Activated CD4-positive, alpha-beta memory T cell treated with anti-CD3 and anti-CD28 coated beads for 36 hours (primary cell): ENCODE measurements at regions of chr2 and their contacts with region 1.

Region 1: DNA sequence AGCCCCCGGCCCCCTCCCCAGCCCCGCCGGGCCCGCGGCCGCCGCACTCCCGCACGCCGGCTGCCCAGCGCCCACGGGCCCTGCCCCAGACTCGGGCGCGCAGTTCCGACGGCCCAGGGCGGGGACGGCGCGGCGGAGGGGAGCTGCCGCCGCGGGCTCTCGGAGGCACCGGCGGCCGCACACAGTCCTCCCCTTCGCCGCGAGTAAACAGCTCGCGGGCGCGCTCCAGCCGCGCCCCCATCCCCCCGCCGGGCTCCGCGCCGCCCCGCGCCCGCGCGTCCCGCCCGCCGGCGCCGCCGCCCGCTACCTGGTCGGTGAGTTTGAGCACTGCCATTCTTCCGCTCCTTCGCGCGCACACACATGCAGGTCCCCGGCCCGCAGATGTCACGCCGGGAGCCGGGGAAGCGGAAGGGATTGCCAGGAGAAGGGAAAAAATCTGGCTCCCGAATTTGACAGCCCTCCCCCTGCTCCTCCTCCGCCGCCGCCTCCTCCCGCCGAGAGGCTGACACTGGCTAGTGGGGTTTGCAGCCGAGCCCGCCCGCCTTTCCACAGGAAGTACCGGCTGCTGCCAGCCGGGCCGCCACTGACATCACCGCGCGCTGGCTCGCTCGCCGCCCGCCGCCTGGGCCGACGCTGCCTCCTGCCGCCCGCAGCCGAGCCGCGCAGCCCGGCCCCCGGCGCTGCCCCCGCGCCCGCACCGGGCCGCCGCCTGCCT is at the start of gene ANKRD44:
- DNase-seq: peak; percentile 91
- H3K4me3 Mint-ChIP-seq: peak within 1 kb of the TSS; percentile 95
- H3K27ac Mint-ChIP-seq: peak within 1 kb of the TSS; percentile 99
- H3K4me1 Mint-ChIP-seq: peaks cover 67% of the 10 kb centered on the region
- H3K27me3 Mint-ChIP-seq: no peaks in the 10 kb centered on the region
- total RNA-seq, gene ANKRD44: 123 to 125 TPM

Region 2: DNA sequence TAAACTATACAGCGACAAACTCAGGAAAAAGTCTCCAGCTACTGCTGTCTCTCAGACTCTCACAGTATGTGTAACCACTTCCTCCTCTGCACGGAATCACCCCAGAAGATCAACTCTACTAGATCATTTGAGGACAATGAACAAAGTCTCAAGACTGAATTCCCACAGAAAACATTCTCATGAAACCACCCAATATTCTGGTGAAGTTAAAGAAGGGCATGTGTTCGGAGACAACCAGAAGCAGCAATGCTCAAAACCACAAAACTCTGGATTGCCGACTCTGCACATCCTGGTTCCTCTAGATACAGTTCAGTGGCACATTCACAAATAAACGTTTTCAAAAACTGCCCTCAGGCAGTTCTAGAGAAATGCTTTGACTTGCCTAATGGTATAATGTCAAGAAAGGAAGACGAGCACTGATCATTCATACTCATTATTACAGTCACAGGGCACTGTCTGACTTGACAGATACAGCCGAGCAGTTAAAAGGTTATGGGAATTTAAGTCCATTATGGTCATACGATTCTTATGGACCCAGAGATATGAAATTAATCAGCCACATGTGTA is 1047.2 kb before region 1 on chr2:
- CTCF ChIA-PET with region 1: no interaction called
- POLR2A ChIA-PET with region 1: no interaction called
- intact Hi-C with region 1: loop called (anchors 10 kb)
- DNase-seq: peak; percentile 62
- H3K4me3 Mint-ChIP-seq: peak overlapping the region; percentile 75
- H3K27ac Mint-ChIP-seq: peak overlapping the region; percentile 99
- H3K4me1 Mint-ChIP-seq: peaks cover 77% of the 10 kb centered on the region
- H3K27me3 Mint-ChIP-seq: no peaks in the 10 kb centered on the region

Region 3: DNA sequence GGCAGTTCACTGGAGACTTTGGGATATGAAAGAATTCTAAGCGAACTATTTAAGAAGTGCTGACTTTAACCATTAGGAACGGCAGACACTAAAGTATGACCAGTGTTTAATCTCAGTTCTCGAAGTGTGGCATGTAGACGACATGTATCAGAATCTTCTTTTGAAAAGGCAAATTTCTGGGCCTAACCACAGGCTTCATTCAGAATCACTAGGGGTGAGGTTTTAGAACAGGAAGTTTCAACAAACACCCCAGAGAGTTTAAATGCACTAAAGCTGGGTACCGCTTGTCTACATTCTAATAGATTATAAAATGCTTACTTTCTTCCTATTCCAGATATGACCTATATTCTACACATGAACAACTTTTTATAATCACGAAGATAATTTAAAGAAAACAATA is 180.1 kb before region 1 on chr2:
- CTCF ChIA-PET with region 1: no interaction called
- POLR2A ChIA-PET with region 1: interaction called, 3 read pairs
- intact Hi-C with region 1: loop called (anchors 5 kb)
- DNase-seq: no peak
- H3K4me3 Mint-ChIP-seq: no peak overlapping the region
- H3K27ac Mint-ChIP-seq: peak overlapping the region; percentile 14
- H3K4me1 Mint-ChIP-seq: peaks cover 79% of the 10 kb centered on the region
- H3K27me3 Mint-ChIP-seq: no peaks in the 10 kb centered on the region

Region 4: DNA sequence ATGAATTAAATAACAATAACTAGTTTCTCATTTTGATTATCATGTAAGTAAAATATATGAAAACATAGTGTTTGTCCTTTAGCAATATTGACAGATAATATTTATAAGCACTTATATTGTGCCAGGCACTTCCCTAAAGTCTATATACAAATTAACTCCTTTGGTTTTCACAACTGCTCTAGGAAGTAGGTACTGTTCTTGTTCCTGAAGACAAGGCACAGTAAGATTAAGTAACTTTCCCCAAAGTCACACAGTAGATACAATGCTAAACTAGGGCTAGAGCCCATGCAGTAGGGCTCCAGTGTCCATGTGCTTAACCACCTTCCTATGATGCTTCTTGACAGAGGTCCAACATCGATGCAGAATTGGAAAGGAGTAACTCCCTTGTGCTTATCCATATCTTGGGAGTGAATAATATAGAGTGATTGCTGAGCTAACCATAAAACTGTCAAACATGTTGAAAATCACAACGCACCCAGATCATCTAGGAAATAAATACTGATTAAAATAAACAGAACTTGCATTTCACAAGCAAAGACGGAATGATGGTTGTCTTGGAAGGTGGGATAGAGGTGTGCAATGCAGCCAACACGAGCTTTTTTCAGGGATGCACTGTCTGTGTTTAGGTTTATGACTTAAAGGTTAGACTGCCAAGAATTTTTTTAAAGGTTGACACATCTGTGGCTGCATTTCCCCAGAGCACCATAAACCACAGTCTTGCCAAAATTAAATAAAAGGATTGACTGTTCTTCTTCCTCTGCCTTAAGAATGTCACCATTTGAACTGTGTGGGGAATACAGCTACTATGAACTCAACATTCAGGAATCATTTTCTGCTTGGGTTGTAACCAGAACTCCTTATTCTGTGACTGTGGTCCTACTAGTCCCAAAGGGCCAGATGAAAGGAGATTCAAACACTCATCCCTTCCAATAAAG is 80.7 kb before region 1 on chr2:
- CTCF ChIA-PET with region 1: no interaction called
- POLR2A ChIA-PET with region 1: interaction called, 12 read pairs
- intact Hi-C with region 1: no loop called
- DNase-seq: no peak
- H3K4me3 Mint-ChIP-seq: no peak overlapping the region
- H3K27ac Mint-ChIP-seq: peak overlapping the region; percentile 67
- H3K4me1 Mint-ChIP-seq: peaks cover 80% of the 10 kb centered on the region
- H3K27me3 Mint-ChIP-seq: no peaks in the 10 kb centered on the region

Region 5: DNA sequence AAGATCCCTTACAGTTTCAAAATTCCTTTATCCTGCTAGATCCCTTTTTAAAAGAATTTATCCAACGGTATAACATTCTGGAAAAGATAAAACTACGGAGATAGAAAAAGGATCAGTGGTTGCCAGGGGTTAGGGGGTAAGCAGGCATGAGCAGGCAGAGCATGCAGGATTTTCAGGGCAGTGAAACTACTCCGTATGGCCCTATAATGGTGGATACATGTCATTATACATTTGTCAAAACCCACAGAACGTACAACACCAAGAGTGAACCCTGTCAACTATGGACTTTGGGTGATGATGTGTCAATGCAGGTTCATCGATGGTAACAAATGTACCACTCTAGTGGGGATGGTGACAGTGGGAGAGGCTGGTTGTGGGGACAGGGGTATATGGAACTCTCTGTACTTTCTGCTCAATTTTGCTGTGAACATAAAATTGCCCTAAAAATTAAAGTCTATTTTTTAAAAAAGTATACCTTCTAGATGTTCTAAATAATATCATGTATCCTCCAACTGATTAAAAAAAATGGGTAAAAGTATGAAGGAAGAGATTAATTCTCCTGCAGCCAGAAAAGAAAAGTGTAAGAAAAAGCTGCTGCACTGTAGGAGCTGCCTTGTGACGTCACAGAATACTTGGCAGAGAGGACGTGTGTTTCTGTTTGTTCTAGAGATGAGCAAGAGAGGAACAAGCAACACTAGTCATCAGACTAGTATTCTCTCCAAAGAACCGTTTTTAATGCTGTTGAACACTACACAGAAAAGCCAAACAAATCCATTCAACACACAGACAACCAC is 23.4 kb before region 1 on chr2:
- CTCF ChIA-PET with region 1: interaction called, 4 read pairs
- POLR2A ChIA-PET with region 1: interaction called, 101 read pairs
- intact Hi-C with region 1: loop called (anchors 1 kb)
- DNase-seq: peak; percentile 64
- H3K4me3 Mint-ChIP-seq: peak overlapping the region; percentile 73
- H3K27ac Mint-ChIP-seq: peak overlapping the region; percentile 95
- H3K4me1 Mint-ChIP-seq: peaks cover 78% of the 10 kb centered on the region
- H3K27me3 Mint-ChIP-seq: no peaks in the 10 kb centered on the region

Region 6: DNA sequence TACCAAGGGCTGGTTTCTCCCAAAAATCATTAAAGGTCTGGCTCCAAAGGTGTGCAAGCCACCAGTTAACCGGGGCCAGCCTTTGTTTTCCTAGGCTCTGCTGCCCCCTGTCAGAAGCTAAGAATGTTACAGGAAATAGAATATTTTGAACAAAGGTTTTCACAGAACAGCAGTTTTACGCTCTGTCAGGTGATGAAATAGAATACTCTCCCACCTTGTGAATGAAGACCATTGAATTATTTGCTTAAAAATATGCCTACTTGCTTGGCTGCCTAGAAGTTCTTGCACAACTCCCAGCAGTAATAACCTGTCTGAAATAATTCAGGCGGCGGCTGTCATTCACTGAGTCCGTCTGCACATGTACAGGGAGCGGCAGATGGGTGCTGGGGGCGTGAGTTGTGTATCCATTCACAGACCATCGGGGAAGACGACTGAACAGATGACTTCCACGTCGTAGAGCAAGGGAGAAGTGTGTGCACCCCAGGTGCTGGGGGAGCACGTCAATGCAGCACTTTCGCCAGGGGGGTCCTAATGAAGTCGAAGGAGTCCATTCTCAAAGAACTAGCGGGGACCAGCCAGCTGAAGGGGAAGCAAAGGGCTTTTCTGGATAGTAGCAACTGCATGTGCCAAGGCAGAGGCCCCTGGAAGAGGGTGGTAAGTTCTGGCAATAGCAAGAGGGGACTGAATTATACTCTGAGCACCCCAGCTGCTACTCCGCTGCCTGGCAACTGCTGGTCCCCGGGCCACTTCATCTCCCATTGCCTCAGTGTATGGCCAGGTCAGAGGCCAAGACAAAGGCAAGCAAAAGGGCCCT is 68.3 kb after region 1 on chr2:
- CTCF ChIA-PET with region 1: interaction called, 4 read pairs
- POLR2A ChIA-PET with region 1: no interaction called
- intact Hi-C with region 1: loop called (anchors 5 kb)
- DNase-seq: peak; percentile 72
- H3K4me3 Mint-ChIP-seq: no peak overlapping the region
- H3K27ac Mint-ChIP-seq: no peak overlapping the region
- H3K4me1 Mint-ChIP-seq: peaks cover 15% of the 10 kb centered on the region
- H3K27me3 Mint-ChIP-seq: peaks cover 4% of the 10 kb centered on the region

Region 7: DNA sequence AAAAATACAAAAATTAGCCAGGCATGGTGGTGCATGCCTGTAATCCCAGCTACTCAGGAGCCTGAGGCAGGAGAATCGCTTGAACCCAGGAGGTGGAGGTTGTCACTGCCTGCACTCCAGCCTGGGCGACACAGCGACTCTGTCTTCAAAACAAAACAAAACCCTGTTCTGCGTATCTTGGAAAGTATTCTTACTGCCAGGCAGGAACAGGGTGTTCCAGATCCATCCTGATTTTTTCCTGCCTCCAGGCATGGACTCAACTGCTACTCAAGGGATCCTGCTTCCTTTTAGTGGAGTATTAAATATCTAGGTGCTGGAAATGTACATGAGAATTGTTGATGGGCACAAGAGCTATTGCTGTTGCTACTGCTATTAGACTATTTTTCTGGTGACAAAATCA is 177.0 kb after region 1 on chr2:
- CTCF ChIA-PET with region 1: no interaction called
- POLR2A ChIA-PET with region 1: no interaction called
- intact Hi-C with region 1: no loop called
- DNase-seq: no peak
- H3K4me3 Mint-ChIP-seq: no peak overlapping the region
- H3K27ac Mint-ChIP-seq: peak overlapping the region; percentile 62
- H3K4me1 Mint-ChIP-seq: peaks cover 20% of the 10 kb centered on the region
- H3K27me3 Mint-ChIP-seq: no peaks in the 10 kb centered on the region